ENCODE measurements at regions of chr17 and their contacts with region 1.

Region 1: DNA sequence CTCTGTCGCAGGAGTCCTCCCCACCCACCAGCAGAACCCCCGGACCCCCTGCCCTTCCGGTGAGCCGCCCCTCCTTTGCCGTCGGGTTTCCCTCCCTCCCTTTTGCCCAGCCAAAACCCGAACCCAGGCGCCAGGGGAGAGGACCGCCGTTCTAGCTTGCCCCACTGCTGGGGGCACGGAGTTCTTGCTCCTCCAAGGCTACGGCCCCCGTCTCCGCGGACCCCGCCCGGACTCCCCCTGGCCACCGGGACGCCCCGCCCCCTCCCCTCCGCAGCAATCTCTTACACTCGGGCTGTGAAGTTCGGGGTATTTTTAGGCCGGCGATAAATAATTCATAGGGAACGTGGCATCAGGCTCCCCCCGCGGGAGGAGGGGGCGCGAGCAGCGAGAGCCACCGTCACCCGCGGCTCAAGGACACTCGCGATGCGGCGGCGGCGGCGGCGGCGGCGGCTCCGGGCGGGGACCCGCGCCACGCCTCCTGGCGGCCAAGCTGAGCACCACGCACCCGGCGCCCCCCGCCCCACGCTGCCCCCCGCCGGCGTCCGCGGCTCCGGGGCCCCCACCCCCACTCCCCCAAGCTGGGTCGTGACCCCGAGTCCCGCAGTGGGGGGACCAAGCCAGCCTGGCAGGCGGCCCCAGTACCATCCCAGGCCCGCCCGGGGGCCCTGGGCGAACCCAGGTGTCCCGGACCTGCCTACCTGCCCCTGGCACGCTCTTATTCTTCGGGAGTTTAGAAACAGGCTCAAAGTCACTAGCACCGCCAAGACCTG is at the start of gene GRIN2C:
- DNase-seq: no peak
- ATAC-seq: peak in 1 of 2 experiments; percentile 18; a peak in 3 of 6 replicates
- H3K4me3 ChIP-seq: peak within 1 kb of the TSS; percentile 39
- H3K27ac ChIP-seq: peak within 1 kb of the TSS in 1 of 2 experiments; percentile 24; a peak in 2 of 6 replicates
- H3K4me1 ChIP-seq: peaks cover 40% of the 10 kb centered on the region
- CTCF ChIP-seq: peak; percentile 82
- EP300 ChIP-seq: no peak
- POLR2A ChIP-seq: no peak
- RAD21 ChIP-seq: peak in 1 of 2 experiments; percentile 45; a peak in 3 of 5 replicates
- polyA plus RNA-seq, gene GRIN2C: 0.15 and 0.17 TPM in 2 replicates

Region 2: GRCh38 chr17:74833501-74834377 is 25.9 kb before region 1 on chr17:
- CTCF ChIA-PET with region 1: interaction called, 851 read pairs
- POLR2A ChIA-PET with region 1: no interaction called
- DNase-seq: no peak
- ATAC-seq: peak; percentile 45 to 62; a peak in 4 of 6 replicates
- H3K4me3 ChIP-seq: no peak overlapping the region
- H3K27ac ChIP-seq: no peak overlapping the region
- H3K4me1 ChIP-seq: no peaks in the 10 kb centered on the region; the same call in 2 of the 3 replicates
- CTCF ChIP-seq: no peak
- EP300 ChIP-seq: no peak
- POLR2A ChIP-seq: no peak
- RAD21 ChIP-seq: no peak

Region 3: DNA sequence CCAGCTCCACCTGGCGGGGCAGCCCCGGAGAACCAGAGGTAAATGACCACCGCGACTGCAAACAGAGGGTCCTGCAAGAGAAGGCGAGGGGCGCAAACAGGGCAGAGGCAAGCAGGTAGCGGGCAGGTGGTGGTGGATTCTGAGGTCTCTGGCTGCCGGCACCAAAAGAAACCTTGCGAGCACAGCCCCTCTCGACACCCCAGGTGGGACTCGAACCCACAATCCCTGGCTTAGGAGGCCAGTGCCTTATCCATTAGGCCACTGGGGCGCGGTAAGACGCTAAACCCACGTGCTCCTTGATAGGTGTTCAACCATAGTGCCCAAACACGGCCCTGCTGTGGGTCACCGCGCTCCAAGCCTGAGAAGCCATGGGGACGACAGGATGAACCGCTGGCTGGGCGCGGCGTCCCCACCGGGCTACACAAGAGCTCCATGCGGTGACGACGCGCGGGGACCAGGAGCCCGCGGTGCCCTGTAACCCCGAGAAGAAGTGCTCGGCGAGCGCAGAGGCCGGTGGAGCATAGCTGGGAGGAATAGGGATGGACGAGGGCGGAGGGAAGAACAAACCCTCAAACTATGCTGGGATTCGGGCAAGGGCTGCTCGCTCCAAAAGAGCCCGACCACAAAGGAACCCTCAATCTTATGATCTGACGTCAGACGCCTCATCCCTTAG is 174.7 kb after region 1 on chr17:
- CTCF ChIA-PET with region 1: no interaction called
- POLR2A ChIA-PET with region 1: no interaction called
- DNase-seq: peak; percentile 81 to 97
- ATAC-seq: peak; percentile 57 to 71
- H3K4me3 ChIP-seq: peak overlapping the region; percentile 73
- H3K27ac ChIP-seq: peak overlapping the region; percentile 97
- H3K4me1 ChIP-seq: peaks cover 30% of the 10 kb centered on the region
- CTCF ChIP-seq: no peak
- EP300 ChIP-seq: no peak
- POLR2A ChIP-seq: no peak
- RAD21 ChIP-seq: no peak; a peak in 1 of 5 replicates